Aorta (tissue), 5 donors: ENCODE measurements at regions of chr21 and their contacts with region 1.

Region 1: DNA sequence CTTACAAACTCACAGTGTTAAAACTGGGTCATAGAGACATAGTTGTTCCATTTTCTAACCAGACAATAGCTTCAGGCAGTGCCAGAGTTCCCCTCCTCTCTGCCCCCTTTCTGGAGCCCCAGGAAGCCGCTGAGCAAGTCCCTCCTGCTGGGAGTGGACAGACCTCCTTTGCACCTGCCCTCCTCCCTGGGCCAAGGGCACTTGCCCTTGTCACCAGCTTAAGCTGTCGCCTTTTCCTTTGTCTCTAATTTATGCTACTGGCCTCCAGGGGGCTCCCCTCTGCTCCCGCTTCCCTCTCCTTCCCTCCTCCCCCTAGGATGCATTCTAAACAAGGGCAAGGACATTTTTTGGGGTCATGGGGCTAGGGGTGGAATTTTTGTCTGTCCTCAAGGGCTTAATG is 182.4 kb downstream of the MIS18A start:
- DNase-seq: no peak
- ATAC-seq: no peak
- H3K4me3 ChIP-seq: no peak overlapping the region
- H3K27ac ChIP-seq: no peak overlapping the region
- H3K4me1 ChIP-seq: no peaks in the 10 kb centered on the region
- H3K27me3 ChIP-seq: no peaks in the 10 kb centered on the region

Region 2: GRCh38 chr21:31873696-31874599 is 222.5 kb before region 1 on chr21:
- intact Hi-C with region 1: loop called in 1 of 2 experiments (anchors 10 kb)
- DNase-seq: peak; percentile 58 to 85
- ATAC-seq: no peak
- H3K4me3 ChIP-seq: peak overlapping the region; percentile 44 to 62
- H3K27ac ChIP-seq: no peak overlapping the region
- H3K4me1 ChIP-seq: no peaks in the 10 kb centered on the region
- H3K27me3 ChIP-seq: no peaks in the 10 kb centered on the region

Region 3: DNA sequence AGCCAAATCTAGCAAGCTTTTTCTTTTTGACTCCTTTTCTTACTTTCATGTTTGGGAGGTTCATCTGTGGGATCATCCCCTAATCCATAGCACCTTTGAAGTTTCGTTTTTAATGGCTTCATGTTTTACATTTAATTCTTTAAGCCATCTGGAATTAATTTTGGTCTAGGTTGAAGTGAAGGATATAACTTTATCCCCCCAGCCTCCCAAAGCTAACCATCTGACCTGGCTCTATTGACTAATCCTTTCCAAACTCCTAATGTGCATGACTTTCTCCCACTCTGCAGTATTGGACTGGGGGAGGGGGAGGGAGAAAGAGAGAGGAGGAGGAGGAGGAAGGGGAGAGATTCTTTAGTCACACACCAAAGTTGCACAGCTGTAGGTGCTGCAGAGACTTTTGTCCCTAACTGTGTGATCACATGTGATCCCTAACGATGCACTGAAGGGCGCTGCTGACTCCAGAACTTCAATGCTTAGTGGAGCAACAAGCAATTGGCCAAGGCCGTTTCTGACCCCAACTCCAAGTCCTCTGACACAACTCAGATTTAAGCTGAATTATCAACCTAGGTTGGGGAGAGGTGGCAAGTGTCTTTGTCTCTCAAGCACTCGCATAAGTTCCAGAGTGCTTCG is 32.0 kb before region 1 on chr21:
- intact Hi-C with region 1: no loop called
- DNase-seq: no peak
- ATAC-seq: no peak
- H3K4me3 ChIP-seq: no peak overlapping the region
- H3K27ac ChIP-seq: no peak overlapping the region
- H3K4me1 ChIP-seq: no peaks in the 10 kb centered on the region
- H3K27me3 ChIP-seq: no peaks in the 10 kb centered on the region

Region 4: GRCh38 chr21:32248571-32249530 is 152.4 kb after region 1 on chr21:
- intact Hi-C with region 1: loop called in 1 of 2 experiments (anchors 5 kb)
- DNase-seq: no peak
- ATAC-seq: no peak
- H3K4me3 ChIP-seq: no peak overlapping the region
- H3K27ac ChIP-seq: no peak overlapping the region
- H3K4me1 ChIP-seq: peaks cover 0 to 2% of the 10 kb centered on the region in 2 donors
- H3K27me3 ChIP-seq: no peaks in the 10 kb centered on the region

Region 5: DNA sequence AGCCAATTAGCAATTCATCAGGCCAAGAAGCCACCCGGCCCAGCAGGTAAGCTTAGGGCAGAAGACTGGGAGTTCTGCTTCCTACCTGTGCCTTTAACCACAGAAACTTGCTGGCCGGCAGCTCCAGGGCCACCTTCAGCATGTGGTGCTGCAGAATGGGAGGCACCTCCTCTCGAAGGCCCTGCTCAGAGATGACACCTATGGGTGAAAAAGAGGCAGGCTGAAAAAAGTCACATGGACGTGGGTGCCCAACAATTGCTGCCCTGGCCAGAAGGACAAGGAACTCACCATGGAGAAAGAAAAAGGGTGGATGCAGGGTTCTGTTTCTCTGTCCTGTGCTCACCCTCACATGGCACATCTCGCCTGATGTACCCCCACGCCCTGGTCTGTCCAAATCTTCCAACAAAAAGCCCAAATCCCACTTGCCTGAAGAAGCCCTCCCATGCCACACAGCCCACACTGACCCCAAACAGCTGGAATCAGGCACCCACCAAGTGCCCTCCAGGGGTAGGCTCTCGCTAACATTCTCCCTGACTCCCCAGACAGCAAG is 263.4 kb after region 1 on chr21:
- intact Hi-C with region 1: no loop called
- DNase-seq: no peak
- ATAC-seq: no peak
- H3K4me3 ChIP-seq: no peak overlapping the region
- H3K27ac ChIP-seq: no peak overlapping the region
- H3K4me1 ChIP-seq: no peaks in the 10 kb centered on the region
- H3K27me3 ChIP-seq: no peaks in the 10 kb centered on the region